PC-3 (cell line): ENCODE measurements at regions of chr7 and their contacts with region 1.

Region 1: GRCh38 chr7:3244241-3244814 is 56.7 kb upstream of the SDK1 start:
- DNase-seq: peak; percentile 87
- ATAC-seq: peak; percentile 95
- H3K4me3 ChIP-seq: peak overlapping the region; percentile 26; the same call in 1 of the 2 replicates
- H3K27ac ChIP-seq: peak overlapping the region; percentile 66
- H3K4me1 ChIP-seq: peaks cover 28% of the 10 kb centered on the region
- H3K27me3 ChIP-seq: no peaks in the 10 kb centered on the region
- CTCF ChIP-seq: no peak

Region 2: GRCh38 chr7:2940466-2940865 is 303.9 kb before region 1 on chr7:
- CTCF ChIA-PET with region 1: interaction called, 21 read pairs
- POLR2A ChIA-PET with region 1: no interaction called
- intact Hi-C with region 1: no loop called
- DNase-seq: no peak
- ATAC-seq: no peak
- H3K4me3 ChIP-seq: no peak overlapping the region
- H3K27ac ChIP-seq: no peak overlapping the region
- H3K4me1 ChIP-seq: no peaks in the 10 kb centered on the region
- H3K27me3 ChIP-seq: peaks cover 47% of the 10 kb centered on the region
- CTCF ChIP-seq: no peak

Region 3: GRCh38 chr7:3210531-3210930 is 33.8 kb before region 1 on chr7:
- CTCF ChIA-PET with region 1: no interaction called
- POLR2A ChIA-PET with region 1: no interaction called
- intact Hi-C with region 1: loop called (anchors 2 kb)
- DNase-seq: no peak
- ATAC-seq: no peak
- H3K4me3 ChIP-seq: no peak overlapping the region
- H3K27ac ChIP-seq: no peak overlapping the region
- H3K4me1 ChIP-seq: peaks cover under 1% of the 10 kb centered on the region; the same call in 1 of the 2 replicates
- H3K27me3 ChIP-seq: no peaks in the 10 kb centered on the region
- CTCF ChIP-seq: no peak

Region 4: GRCh38 chr7:3272691-3273181 is 28.4 kb after region 1 on chr7:
- CTCF ChIA-PET with region 1: no interaction called
- POLR2A ChIA-PET with region 1: no interaction called
- intact Hi-C with region 1: loop called (anchors 1 kb)
- DNase-seq: peak; percentile 93
- ATAC-seq: peak; percentile 90
- H3K4me3 ChIP-seq: no peak overlapping the region
- H3K27ac ChIP-seq: peak overlapping the region; percentile 33
- H3K4me1 ChIP-seq: peaks cover 21% of the 10 kb centered on the region
- H3K27me3 ChIP-seq: no peaks in the 10 kb centered on the region
- CTCF ChIP-seq: no peak

Region 5: DNA sequence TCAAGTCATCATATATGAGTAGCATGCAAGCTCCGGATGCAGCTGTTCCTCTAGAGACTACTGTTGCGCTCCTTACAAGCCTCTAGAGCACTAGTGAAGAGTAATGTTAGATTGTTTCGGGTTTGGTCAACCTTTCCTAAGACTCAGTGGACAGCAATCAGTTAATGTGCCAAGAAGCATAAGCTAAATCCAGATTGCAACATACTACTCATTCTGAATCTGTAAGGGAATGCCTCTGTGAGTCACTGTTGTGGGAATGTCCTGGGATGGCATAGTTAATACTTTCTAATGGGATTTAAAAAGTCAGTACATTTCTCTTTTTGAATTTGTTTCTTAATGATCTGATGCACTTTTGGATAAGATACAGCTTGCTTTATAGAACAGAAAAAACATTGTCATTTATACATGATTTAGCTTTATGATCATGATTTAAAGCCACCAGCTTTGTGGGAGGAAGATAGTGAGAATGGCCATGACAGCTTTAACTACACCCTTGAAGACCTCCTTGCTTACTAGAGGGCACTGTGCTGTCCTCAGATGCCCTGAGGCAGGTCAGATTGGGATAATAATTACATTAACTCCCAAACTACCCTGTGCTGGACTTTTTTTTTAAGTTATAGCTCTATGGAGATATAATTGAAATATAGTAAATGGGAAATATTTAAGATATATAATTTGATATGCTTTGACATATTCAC is 195.2 kb after region 1 on chr7:
- CTCF ChIA-PET with region 1: no interaction called
- POLR2A ChIA-PET with region 1: no interaction called
- intact Hi-C with region 1: no loop called
- DNase-seq: peak; percentile 86
- ATAC-seq: peak; percentile 76
- H3K4me3 ChIP-seq: peak overlapping the region; percentile 28; the same call in 1 of the 2 replicates
- H3K27ac ChIP-seq: peak overlapping the region; percentile 37; the same call in 1 of the 2 replicates
- H3K4me1 ChIP-seq: peaks cover 34% of the 10 kb centered on the region
- H3K27me3 ChIP-seq: no peaks in the 10 kb centered on the region
- CTCF ChIP-seq: no peak